ENCODE measurements at regions of chr10 and their contacts with region 1.

Region 1: DNA sequence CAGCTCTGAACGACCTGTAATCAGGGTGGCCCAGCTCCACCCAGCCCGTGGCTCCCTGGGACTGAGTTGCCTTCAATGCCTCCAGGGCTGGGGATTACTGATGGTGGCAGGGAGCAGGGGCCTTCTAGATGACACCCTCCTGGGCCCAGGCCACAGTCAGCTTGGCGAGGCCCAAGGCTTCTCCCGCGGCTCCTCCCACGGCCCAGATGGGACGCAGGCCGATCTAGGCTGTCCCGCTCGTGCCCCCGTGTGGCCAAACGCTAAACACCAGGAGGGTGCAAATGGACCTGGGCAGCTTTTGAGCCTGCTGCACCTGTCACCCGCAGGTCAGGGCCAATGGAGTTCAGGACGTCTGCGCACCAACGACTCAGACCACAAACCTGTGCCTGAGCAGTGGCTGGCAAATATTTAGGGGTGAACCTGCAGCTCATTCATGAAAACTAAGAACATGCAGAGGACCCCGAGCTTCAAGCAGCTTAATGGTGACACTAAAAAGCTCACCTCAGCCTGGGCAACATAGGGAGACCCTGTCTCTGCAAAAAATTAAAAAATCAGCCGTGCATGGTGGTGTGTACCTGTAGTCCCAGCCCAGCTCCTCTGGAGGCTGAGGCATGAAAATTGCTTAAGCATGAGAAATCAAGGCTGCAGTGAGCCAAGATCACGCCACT is 43.2 kb downstream of the ASB13 start:
- DNase-seq: peak; percentile 87
- H3K4me3 Mint-ChIP-seq: no peak overlapping the region
- H3K27ac Mint-ChIP-seq: no peak overlapping the region
- H3K4me1 Mint-ChIP-seq: peaks cover 5% of the 10 kb centered on the region
- H3K27me3 Mint-ChIP-seq: peaks cover 5% of the 10 kb centered on the region

Region 2: GRCh38 chr10:5343562-5343961 is 279.7 kb before region 1 on chr10:
- CTCF ChIA-PET with region 1: no interaction called
- POLR2A ChIA-PET with region 1: no interaction called
- DNase-seq: no peak
- H3K4me3 Mint-ChIP-seq: no peak overlapping the region
- H3K27ac Mint-ChIP-seq: no peak overlapping the region
- H3K4me1 Mint-ChIP-seq: no peaks in the 10 kb centered on the region
- H3K27me3 Mint-ChIP-seq: peaks cover 5% of the 10 kb centered on the region

Region 3: DNA sequence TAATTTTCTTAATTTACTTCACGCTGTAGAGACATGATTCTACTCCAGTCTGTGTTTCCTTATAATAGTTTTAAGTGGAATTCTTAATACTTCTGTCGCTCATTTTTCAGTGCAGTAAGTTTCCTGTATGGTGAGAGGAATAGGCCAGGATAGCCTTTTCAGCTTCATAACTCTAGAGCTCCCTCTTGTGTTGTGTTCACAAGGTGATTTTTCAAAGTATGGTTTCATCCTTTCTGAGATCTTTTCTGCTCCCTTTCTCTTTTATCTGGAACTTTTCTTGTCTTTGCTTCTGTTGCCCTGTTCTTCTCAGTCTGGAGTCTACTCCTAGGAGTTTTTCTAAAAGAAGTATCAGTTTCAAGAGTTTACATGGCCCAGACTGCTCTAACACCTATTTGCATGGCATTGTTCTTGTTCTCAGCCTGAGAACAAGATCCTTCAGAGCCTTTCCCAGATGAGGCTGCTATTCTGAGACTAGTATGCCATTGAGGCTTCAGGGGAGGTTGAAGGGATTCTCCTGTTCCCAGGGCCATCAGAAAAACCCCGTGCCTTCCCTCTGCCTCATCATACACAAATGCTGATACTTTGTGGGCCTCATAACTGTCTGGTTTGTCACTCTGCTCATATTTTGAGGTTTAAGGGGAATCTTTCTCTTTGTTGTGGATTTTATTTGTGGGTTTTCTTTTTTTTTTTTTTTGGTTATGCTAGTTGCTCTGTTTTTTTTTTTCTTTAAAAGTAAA is 189.0 kb before region 1 on chr10:
- CTCF ChIA-PET with region 1: interaction called, 19 read pairs
- POLR2A ChIA-PET with region 1: no interaction called
- DNase-seq: peak; percentile 36
- H3K4me3 Mint-ChIP-seq: no peak overlapping the region
- H3K27ac Mint-ChIP-seq: peak overlapping the region; percentile 14
- H3K4me1 Mint-ChIP-seq: peaks cover 12% of the 10 kb centered on the region
- H3K27me3 Mint-ChIP-seq: no peaks in the 10 kb centered on the region

Region 4: DNA sequence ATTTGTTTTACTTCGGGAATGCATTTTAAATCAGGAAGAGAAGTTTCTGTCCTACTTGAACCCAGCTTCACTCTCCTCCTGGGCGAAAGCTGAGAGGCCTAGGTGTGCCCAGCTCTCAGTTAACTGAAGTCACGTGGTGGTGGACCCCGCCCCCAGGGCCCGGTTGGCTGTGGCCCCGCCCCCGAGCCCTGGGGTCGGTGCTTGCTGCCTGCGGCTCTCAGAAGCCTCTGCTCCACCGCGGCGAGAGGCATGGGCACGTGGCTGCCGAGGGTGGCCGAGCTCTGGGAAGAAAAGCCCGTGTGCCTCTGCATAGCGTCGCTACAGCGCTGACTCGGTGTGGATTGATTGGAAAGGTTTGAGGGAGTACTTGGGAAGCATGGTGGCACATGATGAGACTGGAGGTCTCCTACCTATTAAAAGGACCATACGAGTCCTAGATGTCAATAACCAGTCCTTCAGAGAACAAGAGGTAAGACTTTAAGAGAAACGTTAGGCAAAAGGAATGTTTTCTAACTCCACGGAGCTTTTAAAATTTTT is 176.8 kb before region 1 on chr10:
- CTCF ChIA-PET with region 1: interaction called, 23 read pairs
- POLR2A ChIA-PET with region 1: no interaction called
- DNase-seq: peak; percentile 85
- H3K4me3 Mint-ChIP-seq: peak overlapping the region; percentile 76
- H3K27ac Mint-ChIP-seq: peak overlapping the region; percentile 82
- H3K4me1 Mint-ChIP-seq: peaks cover 71% of the 10 kb centered on the region
- H3K27me3 Mint-ChIP-seq: no peaks in the 10 kb centered on the region

Region 5: GRCh38 chr10:5461914-5462840 is 161.0 kb before region 1 on chr10:
- CTCF ChIA-PET with region 1: interaction called, 13 read pairs
- POLR2A ChIA-PET with region 1: no interaction called
- DNase-seq: no peak
- H3K4me3 Mint-ChIP-seq: no peak overlapping the region
- H3K27ac Mint-ChIP-seq: no peak overlapping the region
- H3K4me1 Mint-ChIP-seq: peaks cover 9% of the 10 kb centered on the region
- H3K27me3 Mint-ChIP-seq: no peaks in the 10 kb centered on the region

Region 6: GRCh38 chr10:5605040-5605360 is 18.2 kb before region 1 on chr10:
- CTCF ChIA-PET with region 1: interaction called, 10 read pairs
- POLR2A ChIA-PET with region 1: no interaction called
- DNase-seq: no peak
- H3K4me3 Mint-ChIP-seq: no peak overlapping the region
- H3K27ac Mint-ChIP-seq: no peak overlapping the region
- H3K4me1 Mint-ChIP-seq: no peaks in the 10 kb centered on the region
- H3K27me3 Mint-ChIP-seq: peaks cover 6% of the 10 kb centered on the region

Measured in activated CD4-positive, alpha-beta T cell treated with anti-CD3 and anti-CD28 coated beads, Interleukin-2, amount 10 ng/mL, durations not matched to agents 7 days and 5 days (primary cell).